ENCODE measurements at regions of chr1 and their contacts with region 1.

Region 1: DNA sequence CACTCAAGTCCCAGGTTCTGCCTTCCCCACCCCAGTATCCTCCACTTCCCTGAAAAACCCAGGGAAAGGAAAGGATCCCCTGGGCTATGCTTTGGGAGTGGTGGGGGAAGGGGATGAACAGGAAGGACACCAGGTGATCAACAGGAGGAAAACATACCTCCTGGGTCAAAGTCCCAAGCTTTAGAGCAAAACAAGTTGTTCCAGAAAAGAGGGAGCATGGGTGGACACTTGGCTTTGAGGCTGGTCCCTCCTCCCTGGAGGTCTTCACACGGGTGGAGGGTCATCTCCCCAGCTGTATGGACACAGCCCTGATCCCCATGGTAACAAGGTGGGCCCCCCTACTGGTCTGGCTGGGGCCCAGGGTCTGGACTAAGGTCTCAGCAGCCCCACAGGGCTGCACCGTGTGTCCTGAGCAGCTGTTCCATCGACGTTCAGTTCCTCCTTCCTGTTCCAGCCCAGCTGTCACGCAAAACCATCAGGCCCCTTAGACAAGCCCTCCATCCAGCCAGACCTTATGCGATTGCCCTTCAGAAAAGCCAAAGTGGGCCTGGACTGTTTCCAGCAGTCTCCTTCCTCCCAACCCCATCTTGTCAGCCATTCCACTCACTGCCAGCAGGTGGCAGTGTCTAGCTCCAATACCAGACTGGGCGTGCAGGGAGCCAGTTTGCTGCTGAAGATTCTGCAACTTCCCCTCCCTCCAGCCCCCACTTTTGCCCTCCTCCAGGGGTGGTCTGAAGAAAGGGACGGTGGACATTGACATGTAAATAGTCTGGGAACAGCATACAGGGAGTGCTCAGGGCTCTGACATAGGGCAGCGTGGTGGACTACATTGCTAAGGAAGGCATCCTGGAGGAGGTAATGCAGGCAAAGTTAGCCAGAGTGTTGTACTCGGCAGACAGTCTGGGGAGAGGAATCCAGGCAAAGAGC is 2.9 kb upstream of the PDZK1IP1 start:
- DNase-seq: peak; percentile 79
- CTCF ChIP-seq: peak; percentile 98

Region 2: GRCh38 chr1:47211796-47212269 is 19.1 kb after region 1 on chr1:
- CTCF ChIA-PET with region 1: interaction called, 32 read pairs
- POLR2A ChIA-PET with region 1: no interaction called
- DNase-seq: no peak
- CTCF ChIP-seq: no peak

Region 3: DNA sequence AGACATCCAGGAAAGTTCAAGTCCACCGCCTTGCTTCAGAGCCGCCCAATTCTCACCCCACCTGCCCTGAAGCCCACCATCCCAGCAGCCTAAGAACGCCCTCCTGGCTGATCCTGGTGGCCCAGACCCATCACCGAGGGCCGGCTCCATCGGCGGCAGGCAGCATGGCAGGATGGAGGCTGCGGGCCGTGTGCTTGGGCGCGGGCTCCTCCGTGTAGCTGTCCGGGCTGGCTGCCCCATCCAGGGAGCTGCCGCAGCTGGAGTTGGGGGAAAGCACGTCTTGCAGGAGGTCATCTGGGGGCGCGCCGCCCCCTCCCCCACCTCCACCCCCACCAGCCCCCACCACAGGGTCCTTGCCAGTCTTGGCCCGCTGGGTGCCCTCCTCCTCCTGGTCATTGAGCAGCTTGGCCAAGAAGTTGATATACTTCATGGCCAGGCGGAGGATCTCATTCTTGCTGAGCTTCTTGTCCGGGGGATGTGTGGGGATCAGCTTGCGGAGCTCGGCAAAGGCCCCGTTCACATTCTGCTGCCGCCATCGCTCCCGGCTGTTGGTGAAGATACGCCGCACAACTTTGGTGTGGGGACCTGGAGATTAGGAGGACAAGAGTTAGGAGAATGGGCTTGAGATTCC is 27.0 kb after region 1 on chr1:
- CTCF ChIA-PET with region 1: interaction called, 17 read pairs
- POLR2A ChIA-PET with region 1: no interaction called
- DNase-seq: no peak
- CTCF ChIP-seq: no peak

Region 4: GRCh38 chr1:47232187-47232874 is 39.6 kb after region 1 on chr1 and contains the start of gene TAL1:
- CTCF ChIA-PET with region 1: interaction called, 10 read pairs
- POLR2A ChIA-PET with region 1: no interaction called
- DNase-seq: no peak
- CTCF ChIP-seq: no peak

Region 5: GRCh38 chr1:47469390-47469759 is 276.7 kb after region 1 on chr1:
- CTCF ChIA-PET with region 1: no interaction called
- POLR2A ChIA-PET with region 1: no interaction called
- DNase-seq: no peak
- CTCF ChIP-seq: no peak

Region 6: DNA sequence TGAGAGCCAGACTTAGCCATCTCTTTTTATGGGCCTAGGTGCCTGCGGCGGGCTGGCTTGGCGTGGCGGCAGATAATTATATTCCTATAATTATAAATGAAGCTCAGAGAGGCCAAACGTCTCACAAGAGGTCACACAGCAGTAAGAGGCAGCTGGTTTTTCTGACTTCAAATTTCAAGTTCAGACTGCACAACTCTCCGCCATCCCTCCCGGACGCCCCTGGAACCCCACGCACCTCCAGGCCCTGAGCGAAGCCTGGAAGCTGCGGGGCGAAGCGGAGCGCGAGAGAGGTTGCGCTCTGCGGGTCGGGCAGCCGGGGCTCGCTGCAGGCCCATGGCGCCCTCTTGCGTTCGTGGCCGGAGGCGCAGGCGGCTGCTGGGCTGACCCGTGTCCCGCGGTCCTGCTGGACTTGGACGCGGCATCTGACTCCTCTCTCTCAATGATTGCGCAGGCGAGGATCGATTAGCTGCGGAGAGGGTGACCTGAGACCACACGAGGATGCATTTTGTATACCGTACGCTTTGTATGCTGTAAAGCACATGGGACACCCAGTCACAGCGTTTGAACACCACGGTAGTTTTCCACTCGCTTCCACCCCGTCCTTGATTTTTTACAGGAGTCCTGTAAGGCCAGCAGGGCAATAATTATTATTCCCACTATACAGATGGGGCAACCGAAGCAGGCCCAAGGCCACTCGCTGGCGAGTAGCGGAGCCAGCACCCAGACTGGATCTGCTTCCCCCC is 517.8 kb after region 1 on chr1:
- CTCF ChIA-PET with region 1: interaction called, 17 read pairs
- POLR2A ChIA-PET with region 1: no interaction called
- DNase-seq: peak; percentile 91
- CTCF ChIP-seq: peak; percentile 95

Measured in GM10248 (cell line).